Activated CD4-positive, alpha-beta memory T cell treated with anti-CD3 and anti-CD28 coated beads for 36 hours (primary cell): ENCODE measurements at regions of chr1 and their contacts with region 1.

Region 1: GRCh38 chr1:99481391-99481996 is 164.4 kb upstream of the PALMD start:
- DNase-seq: peak; percentile 12
- H3K4me3 Mint-ChIP-seq: no peak overlapping the region
- H3K27ac Mint-ChIP-seq: no peak overlapping the region
- H3K4me1 Mint-ChIP-seq: no peaks in the 10 kb centered on the region
- H3K27me3 Mint-ChIP-seq: peaks cover 10% of the 10 kb centered on the region

Region 2: DNA sequence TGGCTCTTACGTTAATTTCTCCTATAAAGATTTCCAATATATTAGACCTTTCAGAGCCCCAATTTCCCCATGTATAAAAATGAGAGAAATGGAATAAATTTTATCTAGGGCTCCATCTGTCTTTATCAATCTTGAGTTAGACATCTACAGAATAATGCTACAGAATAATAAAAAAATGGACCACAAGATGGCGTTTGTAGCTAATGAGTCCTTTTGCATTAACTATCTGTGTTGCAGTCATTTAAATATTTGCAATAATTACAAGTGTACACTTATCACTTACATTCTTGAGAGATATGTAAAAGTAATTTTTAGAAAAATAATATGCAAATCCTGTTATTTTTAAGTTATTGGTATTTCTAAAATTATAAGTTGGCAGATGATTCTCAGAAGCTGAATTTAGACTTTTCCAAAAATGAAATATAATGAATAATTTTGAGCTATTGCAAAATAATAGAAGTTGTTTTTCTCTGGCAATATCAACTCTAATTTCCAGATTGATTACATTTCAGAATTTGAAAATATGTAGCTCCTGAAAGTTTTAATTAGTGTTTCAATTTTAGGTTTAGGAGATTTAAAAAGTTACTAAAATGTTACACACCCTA is 732.2 kb before region 1 on chr1:
- CTCF ChIA-PET with region 1: interaction called, 6 read pairs
- POLR2A ChIA-PET with region 1: no interaction called
- intact Hi-C with region 1: loop called (anchors 2 kb)
- DNase-seq: no peak
- H3K4me3 Mint-ChIP-seq: no peak overlapping the region
- H3K27ac Mint-ChIP-seq: no peak overlapping the region
- H3K4me1 Mint-ChIP-seq: no peaks in the 10 kb centered on the region
- H3K27me3 Mint-ChIP-seq: no peaks in the 10 kb centered on the region

Region 3: DNA sequence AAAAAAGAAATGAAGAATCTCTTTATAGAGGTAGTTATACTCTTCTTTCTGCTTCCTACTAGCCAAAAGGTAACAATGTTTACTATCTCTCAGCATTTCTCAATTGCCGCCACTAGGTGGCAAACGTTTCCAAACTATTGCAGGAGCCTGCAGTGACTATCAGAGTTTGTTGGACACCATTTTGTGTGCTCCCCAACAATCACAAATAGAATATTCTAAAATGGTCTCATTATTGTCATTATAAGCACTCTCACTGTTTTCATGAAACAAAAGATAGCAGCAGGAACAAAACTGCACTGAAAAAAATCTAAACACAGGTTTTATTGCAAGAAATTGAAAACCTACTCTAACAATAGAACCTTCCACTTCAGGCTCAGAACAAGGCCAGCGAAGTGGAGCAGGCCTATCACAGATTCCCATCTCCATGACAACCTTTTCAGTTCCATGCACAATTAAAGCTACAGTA is 301.1 kb before region 1 on chr1:
- CTCF ChIA-PET with region 1: interaction called, 33 read pairs
- POLR2A ChIA-PET with region 1: no interaction called
- intact Hi-C with region 1: loop called (anchors 1 kb)
- DNase-seq: peak; percentile 69
- H3K4me3 Mint-ChIP-seq: no peak overlapping the region
- H3K27ac Mint-ChIP-seq: no peak overlapping the region
- H3K4me1 Mint-ChIP-seq: no peaks in the 10 kb centered on the region
- H3K27me3 Mint-ChIP-seq: no peaks in the 10 kb centered on the region

Region 4: DNA sequence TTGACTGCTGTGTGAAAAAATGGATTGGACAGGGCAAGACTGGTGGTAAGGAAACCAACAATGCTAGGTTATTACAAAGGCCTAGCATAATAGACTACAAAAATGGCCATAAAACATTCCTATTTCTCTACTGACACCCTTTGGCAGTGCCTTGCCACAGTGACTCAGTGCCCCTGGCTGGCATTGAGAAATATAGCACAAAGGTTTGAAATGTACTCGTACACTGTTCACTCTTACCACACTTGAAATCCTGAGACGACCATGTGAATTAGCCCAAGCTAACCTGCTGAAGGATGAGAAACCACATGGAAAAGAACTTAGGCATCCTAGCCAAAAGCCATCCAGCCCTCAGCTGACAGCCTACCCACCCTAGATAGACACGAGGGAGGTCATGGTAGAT is 14.6 kb after region 1 on chr1:
- CTCF ChIA-PET with region 1: no interaction called
- POLR2A ChIA-PET with region 1: no interaction called
- intact Hi-C with region 1: no loop called
- DNase-seq: no peak
- H3K4me3 Mint-ChIP-seq: no peak overlapping the region
- H3K27ac Mint-ChIP-seq: no peak overlapping the region
- H3K4me1 Mint-ChIP-seq: no peaks in the 10 kb centered on the region
- H3K27me3 Mint-ChIP-seq: no peaks in the 10 kb centered on the region

Region 5: DNA sequence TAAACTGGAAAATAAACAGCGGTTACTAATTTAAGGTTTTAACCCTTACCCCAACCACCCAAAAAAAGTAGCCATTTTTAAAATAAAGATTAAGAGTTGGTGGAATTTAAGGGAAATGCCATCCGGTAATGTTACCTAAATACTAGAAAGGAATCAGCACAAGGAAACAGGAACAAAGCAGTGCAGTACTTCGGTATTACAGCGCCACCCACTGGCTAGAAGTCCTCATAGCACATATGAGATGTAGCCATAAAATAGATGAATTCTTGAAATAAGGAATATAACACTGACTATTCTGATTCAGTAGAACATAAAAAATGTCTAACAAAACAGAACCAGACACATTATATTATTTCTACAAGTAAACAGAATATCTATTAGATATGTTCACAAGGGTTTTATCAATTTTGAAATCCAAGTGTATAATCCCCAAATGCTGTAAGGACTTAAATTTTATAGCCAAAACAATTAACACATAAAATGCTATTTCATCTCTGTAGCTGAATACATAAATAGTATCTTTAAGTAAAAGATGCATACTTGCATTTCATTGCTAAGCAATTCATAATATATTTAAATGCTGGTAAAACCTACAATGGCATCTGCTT is 226.1 kb after region 1 on chr1:
- CTCF ChIA-PET with region 1: interaction called, 4 read pairs
- POLR2A ChIA-PET with region 1: no interaction called
- intact Hi-C with region 1: loop called (anchors 5 kb)
- DNase-seq: peak; percentile 73
- H3K4me3 Mint-ChIP-seq: no peak overlapping the region
- H3K27ac Mint-ChIP-seq: no peak overlapping the region
- H3K4me1 Mint-ChIP-seq: peaks cover 15% of the 10 kb centered on the region
- H3K27me3 Mint-ChIP-seq: no peaks in the 10 kb centered on the region